Pancreas (tissue), 10 donors: ENCODE measurements at regions of chr6 and their contacts with region 1.

Region 1: GRCh38 chr6:112773187-112773586 is 426.1 kb downstream of the RFPL4B start:
- DNase-seq: no peak
- ATAC-seq: no peak
- H3K4me3 ChIP-seq: no peak overlapping the region
- H3K27ac ChIP-seq: no peak overlapping the region
- H3K4me1 ChIP-seq: no peaks in the 10 kb centered on the region
- H3K27me3 ChIP-seq: no peaks in the 10 kb centered on the region
- CTCF ChIP-seq: no peak

Region 2: GRCh38 chr6:113879186-113880096 is 1106.3 kb after region 1 on chr6:
- intact Hi-C with region 1: loop called in 1 of 3 experiments (anchors 10 kb)
- DNase-seq: peak in 3 of 6 donors; percentile 58 to 70 (median 68)
- ATAC-seq: peak; percentile 99 to 100 (median 100)
- H3K4me3 ChIP-seq: peak overlapping the region in 1 of 4 donors; percentile 27
- H3K27ac ChIP-seq: peak overlapping the region in 2 of 4 donors; percentile 29 to 45
- H3K4me1 ChIP-seq: peaks cover 0 to 7% (median 4%) of the 10 kb centered on the region in 3 donors
- H3K27me3 ChIP-seq: no peaks in the 10 kb centered on the region
- CTCF ChIP-seq: peak; percentile 35 to 64 (median 58)